Activated T-helper 2 cell treated with anti-CD3 and anti-CD28 coated beads, Interferon-gamma antibody, Interleukin-2, Interleukin-4, amounts not matched to agents 10 μg/mL and 5 μg/mL and 100 μg/mL, durations not matched to agents 14 hours and 24 hours and 36 hours (primary cell): ENCODE measurements at regions of chr5 and their contacts with region 1.

Region 1: GRCh38 chr5:157253547-157253946 is 12.4 kb upstream of the CYFIP2 start:
- DNase-seq: no peak
- H3K4me3 Mint-ChIP-seq: peak overlapping the region; percentile 58
- H3K27ac Mint-ChIP-seq: peak overlapping the region; percentile 95
- H3K4me1 Mint-ChIP-seq: peaks cover 87% of the 10 kb centered on the region
- H3K27me3 Mint-ChIP-seq: no peaks in the 10 kb centered on the region

Region 2: DNA sequence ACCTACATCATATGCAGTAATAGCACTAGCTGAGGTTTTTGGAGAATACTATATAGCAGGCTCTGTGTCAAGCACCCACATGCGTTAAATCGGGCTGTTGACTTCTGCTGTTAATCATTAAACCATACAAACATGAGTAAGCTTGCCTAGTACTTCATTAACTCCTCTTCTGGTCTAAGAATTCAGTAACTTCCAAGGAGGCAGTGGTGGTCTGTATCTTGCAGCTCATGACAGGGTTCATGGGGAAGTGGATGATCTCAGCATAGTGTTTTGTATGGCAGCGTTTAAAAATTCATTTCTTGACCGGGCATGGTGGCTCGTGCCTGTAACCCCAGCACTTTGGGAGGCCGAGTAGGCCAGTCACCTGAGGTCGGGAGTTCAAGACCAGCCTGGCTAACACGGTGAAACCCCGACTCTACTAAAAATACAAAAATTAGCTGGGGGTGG is 194.4 kb before region 1 on chr5 and contains the start of gene HAVCR1:
- intact Hi-C with region 1: no loop called
- DNase-seq: no peak
- H3K4me3 Mint-ChIP-seq: no peak within 1 kb of the TSS
- H3K27ac Mint-ChIP-seq: no peak within 1 kb of the TSS
- H3K4me1 Mint-ChIP-seq: peaks cover 4% of the 10 kb centered on the region
- H3K27me3 Mint-ChIP-seq: no peaks in the 10 kb centered on the region
- total RNA-seq, gene HAVCR1: 0.64 and 1.2 TPM in 2 replicates

Region 3: DNA sequence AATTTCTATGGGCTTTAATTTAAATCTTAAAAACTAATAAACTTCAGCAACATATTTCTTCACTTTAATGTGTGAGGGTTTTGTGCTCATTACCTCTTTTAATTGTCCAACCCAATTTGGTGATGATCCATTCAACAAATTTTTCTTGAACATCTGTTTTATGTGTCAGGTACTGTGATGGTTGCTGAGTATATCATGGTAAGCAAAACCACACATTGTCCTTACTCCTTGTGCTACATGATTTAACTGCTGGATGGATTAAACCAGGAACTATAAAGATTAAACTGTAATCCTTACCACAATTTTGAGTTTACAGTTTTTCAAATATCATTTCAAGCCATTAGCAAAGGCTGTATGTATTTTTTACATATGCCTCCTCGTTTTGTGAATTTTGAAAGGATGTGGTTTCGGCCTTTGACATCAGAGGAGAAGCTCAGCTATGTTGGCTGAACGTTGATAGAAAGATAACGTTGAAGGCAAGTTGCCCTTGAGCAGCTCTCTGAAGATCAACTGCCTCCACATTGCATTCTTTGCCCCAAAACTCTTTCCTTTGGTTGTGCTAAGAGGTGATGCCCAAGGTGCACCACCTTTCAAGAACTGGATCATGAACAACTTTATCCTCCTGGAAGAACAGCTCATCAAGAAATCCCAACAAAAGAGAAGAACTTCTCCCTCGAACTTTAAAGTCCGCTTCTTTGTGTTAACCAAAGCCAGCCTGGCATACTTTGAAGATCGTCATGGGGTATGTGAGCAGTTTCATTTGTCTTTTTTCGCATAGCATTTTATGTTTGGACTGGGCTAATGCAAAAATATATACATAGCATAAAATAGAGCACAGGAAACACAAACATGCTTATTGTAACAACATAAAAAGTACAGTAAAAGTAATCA is 72.9 kb before region 1 on chr5 and contains the start of gene ITK:
- intact Hi-C with region 1: loop called (anchors 2 kb)
- DNase-seq: peak; percentile 53
- H3K4me3 Mint-ChIP-seq: peak within 1 kb of the TSS; percentile 99
- H3K27ac Mint-ChIP-seq: peak within 1 kb of the TSS; percentile 98
- H3K4me1 Mint-ChIP-seq: peaks cover 44% of the 10 kb centered on the region
- H3K27me3 Mint-ChIP-seq: no peaks in the 10 kb centered on the region
- total RNA-seq, gene ITK: 313 and 319 TPM in 2 replicates

Region 4: DNA sequence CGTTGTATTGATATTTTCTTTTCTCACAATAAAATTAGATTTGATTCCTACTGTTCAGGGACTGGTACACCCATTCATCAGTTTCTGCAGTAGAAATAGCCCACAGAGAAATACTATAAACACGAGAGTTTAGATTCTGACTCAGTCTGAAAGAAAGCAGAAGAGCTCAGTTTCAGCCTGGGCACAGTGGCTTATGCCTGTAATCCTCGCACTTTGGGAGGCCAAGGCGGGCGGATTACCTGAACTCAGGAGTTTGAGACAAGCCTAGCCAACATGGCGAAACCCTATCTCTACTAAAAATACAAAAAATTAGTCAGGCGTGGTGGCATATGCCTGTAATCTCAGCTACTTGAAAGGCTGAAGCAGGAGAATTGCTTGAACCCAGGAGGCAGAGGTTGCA is 64.3 kb before region 1 on chr5:
- intact Hi-C with region 1: loop called (anchors 2 kb)
- DNase-seq: peak; percentile 6
- H3K4me3 Mint-ChIP-seq: peak overlapping the region; percentile 99
- H3K27ac Mint-ChIP-seq: peak overlapping the region; percentile 88
- H3K4me1 Mint-ChIP-seq: peaks cover 71% of the 10 kb centered on the region
- H3K27me3 Mint-ChIP-seq: no peaks in the 10 kb centered on the region

Region 5: DNA sequence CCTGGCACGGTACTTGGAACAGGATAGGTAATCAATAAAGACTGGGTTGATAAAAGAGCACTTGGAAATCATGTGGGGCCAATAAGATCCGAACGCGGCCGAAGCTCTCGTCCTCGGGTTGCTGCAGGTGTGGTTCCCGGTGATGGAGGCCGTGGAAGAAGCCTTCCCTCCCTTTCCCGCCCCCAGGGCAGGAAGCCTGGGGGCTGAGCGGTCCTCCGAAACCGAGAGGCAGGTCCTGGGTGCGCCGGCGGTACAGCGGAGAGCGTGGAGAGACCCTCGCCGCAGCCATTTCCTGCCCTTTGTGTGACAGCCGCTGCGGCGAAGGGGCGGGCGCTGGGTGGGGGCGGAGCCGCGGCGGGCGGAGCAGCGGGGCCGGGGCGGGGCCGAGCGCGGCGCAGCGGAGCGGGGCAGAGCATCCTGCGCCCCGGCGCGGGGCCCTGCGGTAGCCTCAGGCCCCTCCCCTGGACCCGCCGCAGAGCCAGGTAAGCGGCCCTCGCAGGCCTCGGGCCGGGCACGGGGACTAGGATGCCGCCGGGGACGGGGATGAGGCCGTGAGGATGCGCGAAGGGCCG is 12.3 kb after region 1 on chr5 and contains the start of gene CYFIP2:
- intact Hi-C with region 1: loop called (anchors 1 kb)
- DNase-seq: peak; percentile 84
- H3K4me3 Mint-ChIP-seq: peak within 1 kb of the TSS; percentile 89
- H3K27ac Mint-ChIP-seq: peak within 1 kb of the TSS; percentile 95
- H3K4me1 Mint-ChIP-seq: peaks cover 65% of the 10 kb centered on the region
- H3K27me3 Mint-ChIP-seq: no peaks in the 10 kb centered on the region
- total RNA-seq, gene CYFIP2: 171 and 182 TPM in 2 replicates

Region 6: GRCh38 chr5:157312492-157312891 is 58.9 kb after region 1 on chr5:
- intact Hi-C with region 1: loop called (anchors 1 kb)
- DNase-seq: peak; percentile 47
- H3K4me3 Mint-ChIP-seq: no peak overlapping the region
- H3K27ac Mint-ChIP-seq: peak overlapping the region; percentile 70
- H3K4me1 Mint-ChIP-seq: peaks cover 20% of the 10 kb centered on the region
- H3K27me3 Mint-ChIP-seq: no peaks in the 10 kb centered on the region

Region 7: GRCh38 chr5:157342822-157343402 is 89.4 kb after region 1 on chr5:
- intact Hi-C with region 1: no loop called
- DNase-seq: no peak
- H3K4me3 Mint-ChIP-seq: no peak overlapping the region
- H3K27ac Mint-ChIP-seq: peak overlapping the region; percentile 6
- H3K4me1 Mint-ChIP-seq: peaks cover 29% of the 10 kb centered on the region
- H3K27me3 Mint-ChIP-seq: no peaks in the 10 kb centered on the region